ENCODE measurements at regions of chr6 and their contacts with region 1.

Region 1: DNA sequence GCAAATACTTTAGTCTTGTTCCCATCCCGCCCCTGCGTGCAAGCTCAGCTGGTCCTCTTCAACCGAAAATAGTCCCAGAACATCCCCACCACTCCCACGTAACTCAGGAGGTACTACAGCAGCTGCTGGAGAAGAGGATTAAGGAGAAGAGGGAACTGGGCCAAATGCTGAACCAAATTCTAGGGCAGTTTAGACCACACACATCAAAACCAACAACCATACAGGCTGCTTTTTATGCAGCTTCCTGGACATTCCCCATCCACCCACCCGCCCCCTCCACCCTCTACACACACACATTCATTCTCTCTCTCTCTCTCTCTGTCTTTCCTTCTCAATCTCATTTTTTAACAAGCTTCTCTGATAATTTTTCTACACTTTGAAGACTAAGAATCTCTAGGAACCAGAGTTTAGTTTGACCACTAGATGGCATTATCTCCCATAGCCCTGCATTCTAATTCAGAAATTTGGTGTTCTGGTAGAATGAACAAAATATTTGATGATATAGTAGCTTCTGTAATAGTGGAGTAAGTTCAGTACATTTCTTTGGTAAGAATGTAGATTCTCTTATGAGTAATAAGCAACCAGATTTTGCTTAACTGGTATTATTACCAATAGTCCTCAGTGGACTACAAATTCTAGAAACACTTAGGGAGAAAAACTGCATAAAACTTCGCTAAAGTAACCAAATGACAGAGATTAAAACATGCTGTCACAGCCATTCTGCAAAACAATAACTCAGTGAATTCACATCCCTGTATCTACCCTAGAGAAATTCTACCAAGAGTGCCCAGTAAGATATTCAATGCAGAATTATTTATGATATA is 52.1 kb upstream of the BEND6 start:
- DNase-seq: no peak
- ATAC-seq: no peak
- H3K4me3 Mint-ChIP-seq: no peak overlapping the region
- H3K27ac Mint-ChIP-seq: no peak overlapping the region
- H3K4me1 Mint-ChIP-seq: no peaks in the 10 kb centered on the region
- H3K27me3 Mint-ChIP-seq: peaks cover 16% of the 10 kb centered on the region

Region 2: DNA sequence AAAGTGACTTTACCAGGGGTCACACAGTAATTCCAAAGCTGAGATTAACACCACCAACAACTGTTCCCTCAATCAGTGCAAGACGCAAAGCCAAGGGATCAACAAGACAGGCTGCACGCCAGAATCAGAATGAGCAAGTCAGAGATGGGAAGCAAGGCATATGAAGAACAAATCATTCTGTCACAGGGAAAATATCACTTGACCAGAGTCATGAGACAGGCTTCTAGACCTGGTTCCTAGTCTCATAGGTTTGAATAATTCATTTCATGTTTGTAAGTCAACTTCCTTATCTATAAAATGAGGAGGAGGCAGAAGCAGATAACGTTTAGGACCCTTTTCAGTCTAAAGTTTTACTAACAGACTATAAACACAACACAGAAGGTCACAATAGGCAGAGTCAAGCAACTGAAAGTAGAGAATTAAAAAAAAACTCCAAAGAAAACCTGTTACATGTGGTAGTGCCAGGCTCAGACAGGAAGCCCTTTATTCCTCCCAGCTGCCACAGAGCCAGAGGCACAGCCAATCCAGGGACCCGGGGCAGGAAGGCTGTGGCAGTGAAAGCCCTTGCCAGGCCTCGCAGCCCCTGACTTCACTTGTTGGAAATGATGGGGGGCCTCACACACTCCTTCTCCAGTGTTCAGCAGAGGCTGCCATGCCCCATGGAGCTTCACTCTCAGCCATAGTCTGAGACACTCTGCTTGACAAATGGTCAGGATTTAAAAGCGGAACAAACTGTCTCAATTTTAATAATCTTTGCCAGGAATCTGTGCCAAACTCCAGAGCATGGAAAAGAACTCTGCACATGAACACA is 231.0 kb before region 1 on chr6:
- CTCF ChIA-PET with region 1: no interaction called
- POLR2A ChIA-PET with region 1: no interaction called
- DNase-seq: no peak
- ATAC-seq: no peak
- H3K4me3 Mint-ChIP-seq: no peak overlapping the region
- H3K27ac Mint-ChIP-seq: no peak overlapping the region
- H3K4me1 Mint-ChIP-seq: no peaks in the 10 kb centered on the region
- H3K27me3 Mint-ChIP-seq: peaks cover 10% of the 10 kb centered on the region

Region 3: GRCh38 chr6:56814308-56814707 is 88.5 kb before region 1 on chr6:
- CTCF ChIA-PET with region 1: no interaction called
- POLR2A ChIA-PET with region 1: no interaction called
- DNase-seq: no peak
- ATAC-seq: no peak
- H3K4me3 Mint-ChIP-seq: no peak overlapping the region
- H3K27ac Mint-ChIP-seq: no peak overlapping the region
- H3K4me1 Mint-ChIP-seq: no peaks in the 10 kb centered on the region
- H3K27me3 Mint-ChIP-seq: peaks cover 2% of the 10 kb centered on the region

Region 4: GRCh38 chr6:56835612-56836011 is 67.2 kb before region 1 on chr6:
- CTCF ChIA-PET with region 1: no interaction called
- POLR2A ChIA-PET with region 1: no interaction called
- DNase-seq: no peak
- ATAC-seq: no peak
- H3K4me3 Mint-ChIP-seq: no peak overlapping the region
- H3K27ac Mint-ChIP-seq: no peak overlapping the region
- H3K4me1 Mint-ChIP-seq: no peaks in the 10 kb centered on the region
- H3K27me3 Mint-ChIP-seq: peaks cover 30% of the 10 kb centered on the region

Region 5: DNA sequence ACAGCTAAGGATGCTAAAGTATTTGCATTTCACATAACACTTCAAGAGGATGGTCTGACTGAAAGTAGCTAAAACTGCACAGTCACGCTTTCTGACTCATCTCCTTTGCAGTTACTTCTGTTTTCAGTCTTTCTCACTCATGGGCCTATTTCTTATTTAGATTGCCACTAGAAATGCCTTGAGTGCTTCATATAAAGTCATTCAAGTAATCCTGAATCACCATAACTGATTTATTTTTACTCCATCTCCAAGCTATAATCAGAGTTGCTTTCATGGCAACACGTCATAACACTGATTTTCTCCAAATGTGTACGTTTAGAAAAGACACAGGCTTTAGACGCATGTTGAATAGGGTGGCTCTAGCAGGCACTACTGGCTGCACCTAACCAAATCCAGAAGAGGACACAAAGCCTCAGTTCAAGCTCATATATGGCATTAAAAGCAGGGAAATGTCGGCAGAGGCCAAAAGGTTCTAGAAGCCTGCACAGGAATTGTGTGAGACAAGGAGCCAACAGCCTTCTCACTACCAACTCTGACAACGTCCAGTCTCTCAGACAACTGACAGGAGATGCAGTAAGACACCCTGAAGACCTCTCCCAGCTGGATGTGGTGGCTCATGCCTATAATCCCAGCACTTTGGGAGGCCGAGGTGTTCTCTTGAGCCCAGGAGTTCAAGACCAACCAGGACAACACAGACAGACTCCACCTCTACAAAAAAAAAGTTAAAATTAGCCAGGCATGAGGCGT is 12.0 kb before region 1 on chr6:
- CTCF ChIA-PET with region 1: interaction called, 11 read pairs
- POLR2A ChIA-PET with region 1: no interaction called
- DNase-seq: no peak
- ATAC-seq: no peak
- H3K4me3 Mint-ChIP-seq: no peak overlapping the region
- H3K27ac Mint-ChIP-seq: no peak overlapping the region
- H3K4me1 Mint-ChIP-seq: peaks cover 12% of the 10 kb centered on the region
- H3K27me3 Mint-ChIP-seq: peaks cover 3% of the 10 kb centered on the region

Region 6: GRCh38 chr6:56955171-56956045 is 52.6 kb after region 1 on chr6:
- CTCF ChIA-PET with region 1: interaction called, 18 read pairs
- POLR2A ChIA-PET with region 1: no interaction called
- DNase-seq: peak; percentile 69
- ATAC-seq: peak; percentile 74
- H3K4me3 Mint-ChIP-seq: peak overlapping the region; percentile 72
- H3K27ac Mint-ChIP-seq: peak overlapping the region; percentile 35
- H3K4me1 Mint-ChIP-seq: peaks cover 21% of the 10 kb centered on the region
- H3K27me3 Mint-ChIP-seq: peaks cover 56% of the 10 kb centered on the region

Region 7: DNA sequence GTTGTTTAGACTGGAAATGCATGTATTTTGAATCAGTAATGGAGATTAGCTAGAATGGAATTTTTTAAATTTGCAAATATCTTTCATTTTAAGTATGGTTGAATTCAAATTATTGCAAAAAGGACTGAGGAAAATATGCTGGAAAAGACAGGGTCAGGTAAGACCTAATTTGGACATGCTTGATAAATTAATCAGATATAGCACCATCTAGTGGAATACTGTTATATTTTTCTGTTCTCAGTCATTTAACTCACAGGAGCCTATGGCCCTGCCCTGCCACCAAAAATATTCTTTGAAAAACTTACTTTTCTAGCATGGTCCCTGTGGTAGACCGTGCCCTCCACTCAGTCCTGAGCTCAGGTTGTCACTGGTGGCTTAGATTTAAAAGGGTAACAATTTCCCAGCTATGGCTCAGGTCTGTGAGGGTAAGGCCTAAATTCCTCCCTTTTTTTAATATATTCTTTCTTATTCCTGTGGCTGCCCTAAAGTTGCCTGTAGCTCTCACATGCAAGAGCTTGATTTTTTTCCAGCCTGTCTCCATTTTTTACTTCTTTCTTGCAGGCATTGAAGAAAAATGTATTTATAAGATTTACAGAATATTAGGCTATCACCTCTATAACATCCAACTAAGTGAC is 118.3 kb after region 1 on chr6:
- CTCF ChIA-PET with region 1: interaction called, 21 read pairs
- POLR2A ChIA-PET with region 1: no interaction called
- DNase-seq: no peak
- ATAC-seq: peak; percentile 67
- H3K4me3 Mint-ChIP-seq: no peak overlapping the region
- H3K27ac Mint-ChIP-seq: no peak overlapping the region
- H3K4me1 Mint-ChIP-seq: no peaks in the 10 kb centered on the region
- H3K27me3 Mint-ChIP-seq: peaks cover 28% of the 10 kb centered on the region